GM12878 (cell line): ENCODE measurements at regions of chr11 and their contacts with region 1.

Region 1: GRCh38 chr11:62922658-62923431 is 1.7 kb upstream of the CHRM1 start:
- DNase-seq: no peak
- ATAC-seq: peak; percentile 73
- H3K4me3 ChIP-seq: no peak overlapping the region
- H3K27ac ChIP-seq: no peak overlapping the region
- H3K4me1 ChIP-seq: peaks cover 19% of the 10 kb centered on the region
- H3K27me3 ChIP-seq: peaks cover 12 to 20% of the 10 kb centered on the region in 2 experiments
- CTCF ChIP-seq: peak; percentile 31 to 57 (median 45)
- EP300 ChIP-seq: no peak
- POLR2A ChIP-seq: no peak
- RAD21 ChIP-seq: peak; percentile 28; the same call in 1 of the 2 replicates

Region 2: DNA sequence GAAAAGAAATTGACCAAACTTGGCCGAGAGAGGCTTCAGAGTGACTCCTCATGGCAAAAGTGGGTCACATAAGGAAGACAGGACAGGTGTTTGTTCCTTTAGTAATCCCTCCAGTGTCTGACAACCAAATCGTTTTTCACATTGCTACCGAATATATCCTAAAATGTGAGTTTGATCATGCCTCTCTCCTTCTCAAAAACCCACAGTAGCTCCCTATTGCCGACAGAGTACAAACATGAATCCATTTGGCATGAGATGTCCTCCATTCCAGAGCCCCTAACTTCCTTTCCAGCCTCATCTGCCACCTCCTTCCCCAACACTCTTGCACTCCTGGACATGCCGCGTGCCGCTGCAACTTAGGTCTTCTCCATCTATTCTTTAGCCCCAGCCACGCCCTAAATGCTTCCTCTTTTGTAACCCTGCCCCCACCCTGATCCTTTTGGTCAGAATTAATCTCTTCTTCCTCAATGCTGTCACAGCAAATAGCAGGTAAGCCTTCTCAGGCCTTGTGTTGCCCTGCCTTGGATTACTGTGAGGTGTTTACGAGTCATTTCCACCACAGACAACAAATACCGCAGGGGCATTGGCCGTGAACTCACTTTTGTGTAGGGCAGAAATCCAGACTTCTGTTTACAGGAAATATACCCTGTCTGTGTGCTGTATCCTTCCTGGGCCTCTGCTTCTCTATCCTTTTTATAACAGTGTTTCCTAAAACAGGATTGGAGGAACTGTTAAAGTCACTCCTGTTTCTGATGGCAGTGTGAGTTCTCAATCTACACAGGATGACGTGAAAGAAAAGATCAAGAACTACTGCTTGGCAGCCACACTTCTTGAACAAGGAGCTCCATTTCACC is 889.4 kb before region 1 on chr11:
- CTCF ChIA-PET with region 1: no interaction called
- POLR2A ChIA-PET with region 1: no interaction called
- RAD21 ChIA-PET with region 1: no interaction called
- SMC1A ChIA-PET with region 1: no interaction called
- in situ Hi-C with region 1: no loop called
- intact Hi-C with region 1: no loop called
- DNase-seq: no peak
- ATAC-seq: no peak
- H3K4me3 ChIP-seq: no peak overlapping the region
- H3K27ac ChIP-seq: no peak overlapping the region
- H3K4me1 ChIP-seq: no peaks in the 10 kb centered on the region
- H3K27me3 ChIP-seq: no peaks in the 10 kb centered on the region
- CTCF ChIP-seq: no peak
- EP300 ChIP-seq: no peak
- POLR2A ChIP-seq: no peak
- RAD21 ChIP-seq: no peak

Region 3: DNA sequence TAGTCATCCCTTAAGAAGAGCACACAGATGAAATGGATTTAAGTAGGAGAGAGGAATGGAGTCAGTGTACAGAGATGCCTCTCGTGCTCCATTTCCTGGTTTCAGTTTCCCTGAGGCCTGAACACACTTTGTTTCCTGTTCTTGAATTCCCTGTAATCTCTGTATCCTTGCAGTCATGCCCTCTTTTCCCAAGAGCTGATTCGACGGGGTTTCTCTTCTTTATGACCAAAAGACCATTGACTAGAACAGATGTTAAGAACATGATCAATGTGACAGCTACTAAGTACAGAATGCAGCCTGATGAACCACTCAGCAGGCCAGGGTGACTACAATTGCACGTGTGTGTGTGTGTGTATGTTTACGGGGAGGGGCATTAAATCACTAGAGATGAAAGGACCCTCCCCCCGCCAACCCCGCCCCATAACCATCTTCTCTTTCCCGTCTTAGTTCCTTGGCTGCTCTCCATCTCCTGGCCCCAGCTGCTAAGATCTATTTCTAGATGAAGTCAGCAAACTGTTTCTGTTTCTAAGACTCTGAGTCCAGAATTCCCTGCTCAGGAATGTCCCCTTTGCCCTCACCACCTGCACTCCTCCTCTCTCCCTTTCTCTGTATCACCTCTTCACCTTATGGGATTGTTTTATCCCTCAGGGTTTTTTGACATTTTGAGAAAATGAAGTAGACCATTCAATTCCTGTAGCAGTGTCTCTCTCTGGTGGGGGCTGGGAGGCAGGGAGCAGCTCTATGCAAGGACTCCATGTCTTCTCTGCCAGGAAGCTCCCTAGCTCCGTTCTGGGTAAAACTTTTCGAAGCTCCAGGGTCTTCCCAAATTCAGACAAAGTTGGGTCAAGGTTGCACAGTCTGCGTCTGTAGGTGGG is 35.9 kb after region 1 on chr11:
- CTCF ChIA-PET with region 1: no interaction called
- POLR2A ChIA-PET with region 1: no interaction called
- RAD21 ChIA-PET with region 1: no interaction called
- SMC1A ChIA-PET with region 1: no interaction called
- in situ Hi-C with region 1: no loop called
- intact Hi-C with region 1: no loop called
- DNase-seq: no peak
- ATAC-seq: no peak
- H3K4me3 ChIP-seq: no peak overlapping the region
- H3K27ac ChIP-seq: no peak overlapping the region
- H3K4me1 ChIP-seq: no peaks in the 10 kb centered on the region
- H3K27me3 ChIP-seq: no peaks in the 10 kb centered on the region
- CTCF ChIP-seq: no peak
- EP300 ChIP-seq: no peak
- POLR2A ChIP-seq: no peak
- RAD21 ChIP-seq: no peak

Region 4: GRCh38 chr11:62974848-62975522 is 52.1 kb after region 1 on chr11:
- CTCF ChIA-PET with region 1: interaction called, 10 read pairs
- POLR2A ChIA-PET with region 1: no interaction called
- RAD21 ChIA-PET with region 1: no interaction called
- SMC1A ChIA-PET with region 1: no interaction called
- in situ Hi-C with region 1: no loop called
- intact Hi-C with region 1: no loop called
- DNase-seq: no peak
- ATAC-seq: peak; percentile 78
- H3K4me3 ChIP-seq: no peak overlapping the region
- H3K27ac ChIP-seq: no peak overlapping the region
- H3K4me1 ChIP-seq: no peaks in the 10 kb centered on the region
- H3K27me3 ChIP-seq: no peaks in the 10 kb centered on the region
- CTCF ChIP-seq: peak; percentile 24 to 38 (median 33); a peak in 4 of 6 replicates
- EP300 ChIP-seq: no peak
- POLR2A ChIP-seq: no peak
- RAD21 ChIP-seq: no peak